Natural killer cell (primary cell): ENCODE measurements at regions of chr6 and their contacts with region 1.

Region 1: GRCh38 chr6:36546920-36547645 is at the start of gene STK38:
- DNase-seq: peak; percentile 87 to 96
- ATAC-seq: peak; percentile 84 to 92 (median 87)
- H3K4me3 ChIP-seq: peak within 1 kb of the TSS; percentile 89
- H3K4me3 Mint-ChIP-seq: peak within 1 kb of the TSS; percentile 99
- H3K27ac ChIP-seq: peak within 1 kb of the TSS; percentile 93
- H3K27ac Mint-ChIP-seq: peak within 1 kb of the TSS; percentile 93 to 100
- H3K4me1 ChIP-seq: peaks cover 35% of the 10 kb centered on the region
- H3K4me1 Mint-ChIP-seq: peaks cover 47 to 56% of the 10 kb centered on the region in 2 donors
- H3K27me3 ChIP-seq: no peaks in the 10 kb centered on the region
- H3K27me3 Mint-ChIP-seq: no peaks in the 10 kb centered on the region
- CTCF ChIP-seq: no peak
- total RNA-seq, gene STK38: 105 to 157 (median 126) TPM

Region 2: GRCh38 chr6:36414481-36414880 is 132.6 kb before region 1 on chr6:
- intact Hi-C with region 1: no loop called
- DNase-seq: no peak
- ATAC-seq: no peak
- H3K4me3 ChIP-seq: no peak overlapping the region
- H3K4me3 Mint-ChIP-seq: no peak overlapping the region
- H3K27ac ChIP-seq: no peak overlapping the region
- H3K27ac Mint-ChIP-seq: no peak overlapping the region
- H3K4me1 ChIP-seq: no peaks in the 10 kb centered on the region
- H3K4me1 Mint-ChIP-seq: no peaks in the 10 kb centered on the region
- H3K27me3 ChIP-seq: no peaks in the 10 kb centered on the region
- H3K27me3 Mint-ChIP-seq: peaks cover 14 to 24% of the 10 kb centered on the region in 2 donors
- CTCF ChIP-seq: no peak

Region 3: DNA sequence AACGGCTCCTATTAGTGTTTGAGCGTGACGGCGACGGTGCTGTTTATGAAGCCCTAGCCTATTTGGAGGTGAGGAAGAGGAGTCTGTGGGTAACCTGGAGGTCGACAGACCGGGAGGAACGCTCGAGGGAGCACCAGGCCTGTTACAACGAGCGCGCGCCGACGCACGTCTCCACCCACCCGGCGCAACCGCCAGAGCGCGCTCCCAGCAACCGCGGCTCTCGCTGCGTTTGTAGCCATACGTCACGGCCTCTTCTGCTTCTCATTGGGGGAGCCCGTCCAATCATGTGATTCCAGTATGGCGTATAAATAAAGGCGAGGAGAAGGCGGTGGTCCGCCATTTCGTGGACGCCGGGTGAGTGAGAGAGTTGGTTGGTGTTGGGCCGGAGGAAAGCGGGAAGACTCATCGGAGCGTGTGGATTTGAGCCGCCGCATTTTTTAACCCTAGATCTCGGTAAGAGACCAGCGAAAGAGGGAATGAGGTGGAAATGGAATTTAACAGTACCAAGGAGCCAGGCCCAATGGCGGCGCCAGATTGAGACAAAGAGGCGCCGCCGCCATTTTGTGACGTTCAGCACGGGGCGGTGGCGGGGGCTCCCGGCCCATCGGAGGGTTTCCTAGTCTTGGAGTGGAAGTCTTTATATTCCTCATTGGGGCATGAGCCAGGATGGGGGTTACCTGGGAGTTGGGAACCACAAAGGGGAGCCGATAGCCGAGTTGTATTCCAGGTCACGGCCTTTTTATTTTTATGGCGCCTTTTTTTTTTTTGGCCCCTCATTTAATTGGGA is 47.1 kb after region 1 on chr6 and contains the start of gene SRSF3:
- intact Hi-C with region 1: loop called (anchors 1 kb)
- DNase-seq: peak; percentile 95 to 99
- ATAC-seq: peak; percentile 80 to 96 (median 87)
- H3K4me3 ChIP-seq: peak within 1 kb of the TSS; percentile 82
- H3K4me3 Mint-ChIP-seq: peak within 1 kb of the TSS; percentile 94
- H3K27ac ChIP-seq: peak within 1 kb of the TSS; percentile 98
- H3K27ac Mint-ChIP-seq: peak within 1 kb of the TSS; percentile 97 to 99
- H3K4me1 ChIP-seq: peaks cover 52% of the 10 kb centered on the region
- H3K4me1 Mint-ChIP-seq: peaks cover 59 to 60% of the 10 kb centered on the region in 2 donors
- H3K27me3 ChIP-seq: no peaks in the 10 kb centered on the region
- H3K27me3 Mint-ChIP-seq: peaks cover 0 to 2% of the 10 kb centered on the region in 2 donors
- CTCF ChIP-seq: no peak
- total RNA-seq, gene SRSF3: 445 to 526 (median 447) TPM